ENCODE measurements at regions of chr7 and their contacts with region 1.

Region 1: DNA sequence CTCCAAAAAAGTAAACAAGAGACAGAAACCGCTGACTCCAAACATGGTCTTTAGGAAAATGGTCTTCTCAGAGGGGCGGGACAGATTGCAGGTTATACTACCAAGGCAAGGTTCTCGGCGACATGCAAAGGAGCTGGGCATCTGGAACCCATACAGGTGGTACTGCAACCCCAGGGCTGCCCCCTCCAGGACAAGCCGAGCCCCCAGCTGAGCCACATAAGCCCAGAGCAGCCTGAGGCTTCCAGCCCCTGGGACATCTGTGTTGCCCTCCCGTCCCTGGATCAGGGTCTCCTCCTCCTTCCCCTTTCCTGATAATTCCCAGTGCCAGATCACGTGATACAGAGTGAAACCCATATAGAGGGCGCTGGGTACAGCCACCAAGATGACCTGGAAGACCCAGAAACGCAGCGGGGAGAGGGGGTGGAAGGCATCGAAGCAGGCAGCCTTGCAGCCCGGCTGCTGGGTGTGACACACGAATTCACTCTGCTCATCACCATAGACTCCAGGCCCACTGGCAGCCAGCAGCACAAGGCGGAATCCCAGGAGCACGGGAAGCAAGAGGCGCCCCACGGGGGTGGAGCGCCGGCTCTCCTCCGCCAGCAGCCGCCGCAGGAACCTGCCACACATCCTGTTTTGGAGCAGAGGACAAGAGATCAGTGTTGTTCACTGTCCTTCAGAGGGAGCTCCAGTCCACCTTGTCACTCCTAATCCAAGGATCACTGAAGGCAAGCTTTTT is at the start of gene GJC3:
- DNase-seq: peak in 5 of 6 donors; percentile 7 to 65 (median 19)
- ATAC-seq: peak; percentile 60 to 93 (median 90)
- H3K4me3 ChIP-seq: peak within 1 kb of the TSS in 1 of 4 donors; percentile 29
- H3K27ac ChIP-seq: no peak within 1 kb of the TSS
- H3K4me1 ChIP-seq: no peaks in the 10 kb centered on the region
- H3K27me3 ChIP-seq: no peaks in the 10 kb centered on the region
- CTCF ChIP-seq: no peak
- total RNA-seq, gene GJC3: 0.37 to 8.7 (median 4.7) TPM

Region 2: DNA sequence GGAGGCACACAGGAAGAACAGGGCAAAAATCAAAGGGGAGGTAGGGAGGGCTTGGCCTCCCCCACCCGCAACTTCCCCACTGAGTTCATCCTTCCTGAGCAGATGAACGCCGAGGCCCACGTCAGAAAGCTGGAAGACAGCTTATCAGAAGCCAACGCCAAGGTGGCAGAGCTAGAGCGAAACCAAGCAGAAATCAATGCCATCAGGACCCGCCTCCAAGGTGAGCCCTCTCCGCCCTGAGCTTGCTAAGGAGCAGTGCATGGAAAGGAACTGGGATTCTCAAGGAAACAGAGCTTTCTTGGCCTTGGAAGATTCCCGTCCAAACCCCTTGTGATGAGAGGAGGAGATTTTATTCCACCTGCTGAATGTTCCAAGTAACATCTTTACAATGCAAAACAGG is 640.0 kb before region 1 on chr7:
- intact Hi-C with region 1: no loop called
- DNase-seq: no peak
- ATAC-seq: peak in 2 of 4 donors; percentile 32 to 44
- H3K4me3 ChIP-seq: no peak overlapping the region
- H3K27ac ChIP-seq: no peak overlapping the region
- H3K4me1 ChIP-seq: no peaks in the 10 kb centered on the region
- H3K27me3 ChIP-seq: no peaks in the 10 kb centered on the region
- CTCF ChIP-seq: no peak

Region 3: GRCh38 chr7:99984593-99984992 is 55.4 kb after region 1 on chr7:
- intact Hi-C with region 1: loop called in 1 of 3 experiments (anchors 10 kb)
- DNase-seq: no peak
- ATAC-seq: no peak
- H3K4me3 ChIP-seq: no peak overlapping the region
- H3K27ac ChIP-seq: no peak overlapping the region
- H3K4me1 ChIP-seq: no peaks in the 10 kb centered on the region
- H3K27me3 ChIP-seq: no peaks in the 10 kb centered on the region
- CTCF ChIP-seq: no peak

Region 4: DNA sequence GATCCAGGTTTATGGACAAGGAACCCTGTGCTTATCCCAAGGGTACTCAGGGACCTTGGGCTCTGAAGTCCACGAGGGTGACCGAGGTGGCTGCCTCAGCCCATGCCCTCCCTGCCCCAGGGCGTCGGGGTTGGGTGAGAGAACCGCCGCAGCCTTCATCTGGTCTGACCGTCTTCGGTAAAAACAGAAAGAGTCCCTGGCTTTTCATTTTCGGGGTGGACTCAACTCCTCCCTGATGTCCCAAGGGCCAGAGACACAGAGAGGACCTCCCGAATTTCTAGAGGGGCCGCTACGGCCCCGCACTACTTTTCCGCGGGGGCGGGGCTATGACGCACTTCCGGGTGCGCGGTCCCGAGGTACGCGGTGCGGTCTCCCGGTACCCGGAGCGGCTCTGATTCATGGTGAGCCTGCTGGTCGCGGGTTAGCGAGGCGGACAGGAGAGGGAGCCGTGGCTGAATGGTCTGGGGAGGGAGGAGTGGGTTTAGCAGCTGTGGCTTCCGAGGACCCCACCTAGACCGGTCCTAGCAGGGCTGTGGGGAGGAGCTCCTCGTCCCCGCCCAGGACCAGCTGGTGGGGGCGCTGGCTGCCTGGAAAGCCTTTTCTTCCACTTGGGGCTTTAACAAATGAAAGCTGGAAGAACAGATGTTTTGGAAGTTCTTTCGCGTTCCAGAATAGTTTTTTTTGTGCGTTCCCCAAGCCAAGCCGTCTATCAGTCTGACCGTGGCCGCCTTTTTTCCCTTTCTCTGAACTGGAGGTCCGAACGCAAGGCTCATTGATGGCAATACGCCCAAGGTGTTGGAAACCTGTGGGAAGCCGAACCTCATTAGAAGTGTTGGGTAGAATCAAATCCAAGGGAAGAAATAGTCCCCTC is 120.5 kb after region 1 on chr7 and contains the start of gene ZSCAN21:
- intact Hi-C with region 1: loop called in 1 of 3 experiments (anchors 10 kb)
- DNase-seq: peak; percentile 81 to 93 (median 86)
- ATAC-seq: peak; percentile 90 to 96 (median 91)
- H3K4me3 ChIP-seq: peak within 1 kb of the TSS; percentile 61 to 88 (median 80)
- H3K27ac ChIP-seq: peak within 1 kb of the TSS; percentile 92 to 94 (median 94)
- H3K4me1 ChIP-seq: peaks cover 0 to 10% (median 7%) of the 10 kb centered on the region in 3 donors
- H3K27me3 ChIP-seq: no peaks in the 10 kb centered on the region
- CTCF ChIP-seq: no peak
- total RNA-seq, gene ZSCAN21: 3.8 to 9.6 (median 6.2) TPM

Measured in pancreas (tissue), 10 donors.